Activated T-helper 1 cell treated with anti-CD3 and anti-CD28 coated beads, Interleukin-12 subunit alpha, Interleukin-12 subunit beta, Interleukin-2, Interleukin-4 antibody, amounts not matched to agents 30 ng/mL and 10 ng/mL and 1 ng/mL, durations not matched to agents 14 hours and 24 hours and 36 hours (primary cell): ENCODE measurements at regions of chr22 and their contacts with region 1.

Region 1: GRCh38 chr22:41966607-41967240 is 2.5 kb upstream of the SEPTIN3 start:
- DNase-seq: peak; percentile 37
- H3K4me3 Mint-ChIP-seq: no peak overlapping the region
- H3K27ac Mint-ChIP-seq: no peak overlapping the region
- H3K4me1 Mint-ChIP-seq: peaks cover 8% of the 10 kb centered on the region
- H3K27me3 Mint-ChIP-seq: no peaks in the 10 kb centered on the region

Region 2: DNA sequence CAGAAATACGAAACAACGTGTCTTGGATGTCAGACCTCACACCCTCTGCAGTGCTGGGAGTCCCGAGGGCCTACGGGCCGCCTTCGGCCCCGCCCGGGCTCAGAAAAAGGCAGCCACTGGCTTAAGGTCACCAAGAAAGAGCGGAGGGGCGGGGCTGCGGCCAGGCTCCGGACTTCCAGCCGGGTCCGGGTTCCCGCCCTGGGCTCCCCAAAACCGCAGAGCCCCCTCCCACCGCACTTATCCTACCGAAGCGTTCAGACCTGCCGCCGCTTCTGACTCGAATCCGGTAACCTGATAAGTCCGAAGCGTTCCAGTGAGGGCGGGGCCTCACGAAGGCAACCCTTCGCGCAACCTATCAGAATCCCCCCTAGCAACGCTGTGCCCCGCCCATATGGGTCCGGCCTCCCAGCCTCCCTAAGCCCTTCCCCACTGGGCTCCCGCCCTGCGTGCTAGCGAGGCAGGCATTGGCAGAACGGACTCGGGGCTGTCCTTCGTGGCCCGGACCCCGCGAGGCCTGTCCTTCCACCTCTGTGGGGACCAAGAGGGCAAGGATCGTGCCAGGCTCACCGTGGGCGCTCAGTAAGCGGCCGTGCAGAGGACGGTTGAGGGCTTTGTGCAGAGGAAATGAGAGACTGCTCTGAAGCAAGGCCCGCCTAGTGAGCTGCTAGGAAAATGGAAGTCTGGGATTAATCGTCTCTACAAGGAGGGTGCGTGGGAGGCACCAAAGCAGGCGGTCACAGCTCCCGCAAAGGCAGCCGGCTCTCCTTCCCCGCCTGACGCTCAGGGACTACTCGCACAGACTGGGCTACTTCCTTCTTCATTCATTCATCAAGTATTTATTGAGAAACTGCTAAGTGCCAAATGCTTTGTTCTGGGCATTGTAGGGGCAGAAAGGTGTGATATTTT is 104.0 kb after region 1 on chr22 and contains the start of gene NAGA:
- intact Hi-C with region 1: loop called (anchors 1 kb)
- DNase-seq: peak; percentile 91
- H3K4me3 Mint-ChIP-seq: peak within 1 kb of the TSS; percentile 92
- H3K27ac Mint-ChIP-seq: peak within 1 kb of the TSS; percentile 94
- H3K4me1 Mint-ChIP-seq: peaks cover 53% of the 10 kb centered on the region
- H3K27me3 Mint-ChIP-seq: peaks cover 2% of the 10 kb centered on the region
- total RNA-seq, gene NAGA: 30.5 and 30.9 TPM in 2 replicates

Region 3: DNA sequence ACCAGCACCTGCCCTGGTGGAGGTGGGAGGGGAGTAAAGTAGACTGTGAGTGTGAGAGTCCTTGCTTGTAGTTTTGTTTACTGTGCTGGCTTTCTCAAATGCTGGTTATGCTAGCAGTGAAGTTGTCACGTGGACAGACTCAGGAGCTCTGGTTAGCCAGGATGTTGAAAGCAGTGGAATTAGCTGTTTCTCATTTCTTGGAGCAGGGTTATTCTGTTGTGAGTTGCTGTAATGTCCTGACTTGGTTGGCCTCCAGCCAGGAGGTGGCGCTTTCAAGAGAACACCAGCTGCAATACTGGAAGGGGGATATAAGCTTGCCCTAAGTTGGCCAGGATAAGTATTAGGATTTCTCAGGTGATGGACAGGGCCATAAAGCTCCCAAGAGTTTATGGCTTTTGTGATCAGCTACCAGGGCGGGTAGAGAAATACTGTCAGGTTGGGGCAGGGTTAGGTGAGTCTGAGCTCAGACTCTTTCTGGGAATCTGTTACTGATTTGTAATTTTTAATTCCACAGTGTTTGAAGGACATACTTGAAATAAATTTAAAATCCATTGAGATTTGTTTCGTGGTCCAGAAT is 150.2 kb after region 1 on chr22:
- intact Hi-C with region 1: loop called (anchors 2 kb)
- DNase-seq: no peak
- H3K4me3 Mint-ChIP-seq: no peak overlapping the region
- H3K27ac Mint-ChIP-seq: peak overlapping the region; percentile 18
- H3K4me1 Mint-ChIP-seq: peaks cover 39% of the 10 kb centered on the region
- H3K27me3 Mint-ChIP-seq: peaks cover 2% of the 10 kb centered on the region

Region 4: GRCh38 chr22:42437488-42438292 is 471.0 kb after region 1 on chr22:
- intact Hi-C with region 1: loop called (anchors 1 kb)
- DNase-seq: peak; percentile 76
- H3K4me3 Mint-ChIP-seq: peak overlapping the region; percentile 83
- H3K27ac Mint-ChIP-seq: peak overlapping the region; percentile 73
- H3K4me1 Mint-ChIP-seq: peaks cover 21% of the 10 kb centered on the region
- H3K27me3 Mint-ChIP-seq: peaks cover 8% of the 10 kb centered on the region

Region 5: DNA sequence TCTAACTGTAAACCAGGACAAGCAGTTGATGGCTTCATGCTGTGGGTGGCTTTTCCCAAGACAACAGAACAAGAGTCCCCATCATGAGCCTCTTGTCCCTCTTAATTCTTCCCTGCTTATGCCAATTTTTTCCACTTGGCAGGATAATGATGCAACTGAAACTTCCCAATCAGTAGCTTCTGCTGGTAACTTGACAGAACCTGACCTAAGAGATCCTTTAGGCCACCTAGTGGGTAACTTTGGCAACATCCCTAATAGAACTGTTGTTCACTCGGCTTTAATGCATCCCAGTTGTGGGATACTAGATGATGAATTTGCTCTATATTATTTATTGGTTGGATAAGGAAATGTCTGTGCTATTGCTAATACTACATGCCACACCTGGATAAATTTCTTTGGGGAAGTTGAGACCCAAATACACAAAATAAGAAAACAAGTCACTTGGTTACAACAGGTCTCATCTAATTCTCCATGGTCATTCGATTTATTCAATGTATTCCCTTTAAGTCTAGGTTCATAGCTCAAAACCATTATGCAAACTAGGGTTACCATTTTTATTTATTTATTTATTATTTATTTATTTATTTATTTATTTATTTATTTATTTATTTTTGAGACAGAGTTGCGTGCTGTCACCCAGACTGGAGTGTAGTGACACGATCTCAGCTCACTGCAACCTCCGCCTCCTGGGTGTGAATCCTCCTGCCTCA is 506.9 kb after region 1 on chr22:
- intact Hi-C with region 1: loop called (anchors 1 kb)
- DNase-seq: no peak
- H3K4me3 Mint-ChIP-seq: no peak overlapping the region
- H3K27ac Mint-ChIP-seq: no peak overlapping the region
- H3K4me1 Mint-ChIP-seq: peaks cover 5% of the 10 kb centered on the region
- H3K27me3 Mint-ChIP-seq: peaks cover 11% of the 10 kb centered on the region